Tibial artery (tissue), 4 donors: ENCODE measurements at regions of chr2 and their contacts with region 1.

Region 1: DNA sequence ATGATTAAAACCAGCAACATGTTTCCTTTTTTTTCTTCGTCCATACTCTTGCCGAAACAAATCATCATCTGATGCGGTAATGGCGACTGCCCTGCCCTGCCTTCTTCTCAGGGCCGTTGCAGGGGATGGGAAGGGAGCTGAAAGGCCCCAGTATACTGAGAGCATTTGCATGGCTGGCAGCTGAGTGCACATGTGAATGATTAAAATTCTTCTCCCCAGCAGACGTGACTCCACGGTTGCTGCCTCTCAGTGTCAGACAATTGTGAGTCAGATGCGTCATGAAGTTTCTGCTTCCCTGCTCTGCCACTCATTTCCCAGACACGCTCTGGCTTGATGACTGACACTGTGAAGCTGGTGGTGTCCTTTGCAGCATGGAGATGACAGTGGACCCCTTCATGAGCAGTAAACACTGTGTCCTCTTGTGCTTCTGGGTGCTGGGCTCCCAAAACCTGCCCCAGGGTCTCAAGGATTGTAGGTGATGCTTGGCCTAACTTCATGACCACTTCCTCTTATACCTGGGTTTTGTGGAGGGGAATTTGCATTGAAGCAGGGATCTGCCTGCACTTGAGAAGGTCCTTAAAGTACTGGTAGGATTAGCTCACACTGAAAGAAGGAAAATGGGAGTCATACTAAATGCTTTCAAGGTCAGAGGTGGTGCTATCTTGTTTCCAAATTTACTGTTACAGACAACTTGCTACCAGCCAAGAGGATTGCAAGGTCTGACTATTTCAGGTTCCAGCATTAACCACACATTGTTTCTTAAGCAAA is 222.5 kb upstream of the COPS8 start:
- DNase-seq: peak in 1 of 2 donors; percentile 27
- H3K4me3 ChIP-seq: no peak overlapping the region
- H3K27ac ChIP-seq: no peak overlapping the region
- H3K4me1 ChIP-seq: no peaks in the 10 kb centered on the region
- H3K27me3 ChIP-seq: no peaks in the 10 kb centered on the region
- CTCF ChIP-seq: no peak

Region 2: DNA sequence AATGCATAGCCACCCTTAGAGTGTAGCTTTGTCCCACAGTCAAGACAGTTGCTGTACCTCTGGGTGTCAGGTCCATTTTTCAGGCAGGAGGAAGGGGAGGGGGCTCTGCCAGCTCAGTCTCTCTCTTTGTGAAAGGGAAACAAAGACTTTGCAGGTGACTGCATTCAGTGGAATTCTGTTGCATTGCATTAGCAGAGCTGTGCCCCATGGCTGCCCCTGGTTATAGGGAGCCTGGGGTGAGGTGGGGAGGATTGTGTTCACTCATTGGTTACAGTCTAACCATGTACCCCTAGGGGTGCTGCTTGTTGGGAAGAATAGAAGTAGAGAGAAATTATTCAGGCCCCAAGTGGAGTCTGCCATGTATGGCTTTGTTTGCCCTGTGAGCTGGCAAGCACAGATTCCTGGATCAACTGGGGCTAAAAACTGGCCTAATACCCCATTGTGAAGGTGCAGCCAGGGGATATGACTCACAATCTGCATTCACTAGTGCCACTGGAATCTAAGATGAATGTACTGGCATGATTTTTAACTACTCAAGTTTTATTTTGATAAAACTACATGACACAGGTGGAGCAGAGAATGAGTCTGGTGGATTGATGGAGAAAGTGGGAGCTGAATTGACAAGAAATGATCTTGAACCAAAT is 1793.0 kb before region 1 on chr2:
- intact Hi-C with region 1: loop called (anchors 10 kb)
- DNase-seq: no peak
- H3K4me3 ChIP-seq: no peak overlapping the region
- H3K27ac ChIP-seq: no peak overlapping the region
- H3K4me1 ChIP-seq: no peaks in the 10 kb centered on the region
- H3K27me3 ChIP-seq: peaks cover 0 to 5% of the 10 kb centered on the region in 2 donors
- CTCF ChIP-seq: no peak